ENCODE measurements at regions of chr2 and their contacts with region 1.

Region 1: DNA sequence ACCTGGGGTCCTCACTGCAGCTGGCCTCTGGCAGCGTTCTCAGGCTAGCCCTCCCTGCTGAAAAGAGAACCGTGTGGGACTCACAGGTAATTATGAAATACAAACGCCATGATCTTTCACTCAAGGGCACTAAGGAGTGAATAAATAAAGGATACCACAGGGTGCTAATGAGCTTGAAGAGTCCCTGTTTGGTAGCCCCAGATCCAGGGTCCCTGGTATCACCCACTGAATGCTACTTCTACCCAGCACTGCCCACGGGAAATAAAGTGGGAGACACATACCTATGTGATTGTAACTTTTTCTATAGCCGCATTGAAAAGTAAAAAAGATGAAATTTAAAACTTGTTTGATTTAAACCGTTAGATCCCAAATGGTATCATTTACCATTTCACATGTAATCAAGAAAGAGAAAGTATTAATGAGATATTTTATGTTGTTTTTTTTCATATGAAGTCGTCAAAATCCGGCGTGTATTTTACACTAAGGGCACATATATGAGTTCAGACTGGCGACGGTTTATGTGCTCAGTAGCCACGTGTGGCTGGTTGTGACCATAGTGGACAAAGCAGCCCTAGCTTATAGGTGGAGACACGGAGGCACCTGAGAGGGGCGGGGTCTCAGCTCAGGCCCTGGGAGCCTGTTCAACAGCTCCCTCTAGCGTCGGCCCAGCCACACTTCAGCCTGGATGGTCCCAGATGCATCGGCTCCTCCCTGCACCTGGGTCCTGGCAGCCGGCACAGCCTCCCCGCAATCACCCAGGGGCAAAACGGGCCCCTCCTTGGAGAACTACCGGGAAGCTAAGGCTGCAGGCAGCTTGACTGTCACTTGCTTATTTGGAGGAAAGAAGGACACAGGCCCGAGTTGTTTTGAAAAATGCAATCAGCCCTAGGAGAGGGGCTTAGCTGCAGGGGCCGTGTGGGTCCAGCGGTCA is 39.2 kb downstream of the ODC1 start:
- DNase-seq: peak; percentile 87
- H3K4me3 Mint-ChIP-seq: peak overlapping the region; percentile 66
- H3K27ac Mint-ChIP-seq: peak overlapping the region; percentile 92
- H3K4me1 Mint-ChIP-seq: peaks cover 42% of the 10 kb centered on the region
- H3K27me3 Mint-ChIP-seq: no peaks in the 10 kb centered on the region

Region 2: GRCh38 chr2:10120158-10120886 is 288.6 kb before region 1 on chr2:
- CTCF ChIA-PET with region 1: interaction called, 22 read pairs
- POLR2A ChIA-PET with region 1: no interaction called
- DNase-seq: peak; percentile 96
- H3K4me3 Mint-ChIP-seq: peak overlapping the region; percentile 98
- H3K27ac Mint-ChIP-seq: peak overlapping the region; percentile 99
- H3K4me1 Mint-ChIP-seq: peaks cover 57% of the 10 kb centered on the region
- H3K27me3 Mint-ChIP-seq: no peaks in the 10 kb centered on the region

Region 3: DNA sequence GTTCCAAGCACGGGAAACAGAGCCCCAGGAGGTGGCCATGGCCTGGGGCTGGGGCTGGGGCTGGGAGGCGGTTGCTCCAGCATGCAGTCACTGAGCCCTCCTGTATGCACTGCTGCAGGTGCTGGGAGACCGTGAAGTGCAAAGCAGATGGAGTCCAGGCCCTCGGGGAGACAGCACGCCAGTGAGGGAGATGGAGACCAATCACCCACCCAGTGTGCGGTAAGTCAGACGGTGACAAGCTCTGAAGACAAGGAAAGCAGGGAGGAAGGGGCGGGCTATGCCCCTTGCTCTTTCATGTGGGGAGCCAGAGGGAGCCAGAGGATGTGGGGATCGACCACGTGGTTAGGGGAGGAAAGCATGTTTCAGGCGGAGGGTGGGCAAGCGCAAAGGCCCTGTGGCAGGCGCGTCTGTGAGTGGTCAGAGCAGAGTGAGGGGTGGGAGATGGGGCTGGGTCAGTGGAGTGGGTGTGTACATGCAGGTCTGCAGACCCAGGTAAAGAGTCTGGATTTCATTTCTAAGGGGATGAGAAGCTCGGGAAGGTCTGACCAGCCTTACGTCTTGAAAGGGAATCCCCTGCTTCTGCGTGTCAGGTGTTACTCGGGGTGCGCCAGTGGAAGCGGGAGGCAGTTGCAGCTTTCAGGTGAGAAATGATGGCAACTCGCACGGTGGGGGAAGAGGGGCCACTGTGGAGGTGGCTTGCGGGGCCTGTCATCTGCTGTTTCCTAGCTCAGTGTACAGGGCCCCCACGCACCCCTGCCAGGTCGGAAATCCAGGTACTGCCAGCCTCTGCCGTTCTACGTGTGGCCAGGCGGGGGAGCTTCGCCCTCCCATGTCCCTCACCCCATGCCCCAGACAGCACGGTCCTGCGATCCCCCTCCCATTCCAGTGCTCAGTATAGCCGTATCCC is 266.9 kb before region 1 on chr2:
- CTCF ChIA-PET with region 1: interaction called, 20 read pairs
- POLR2A ChIA-PET with region 1: no interaction called
- DNase-seq: peak; percentile 72
- H3K4me3 Mint-ChIP-seq: peak overlapping the region; percentile 38
- H3K27ac Mint-ChIP-seq: peak overlapping the region; percentile 82
- H3K4me1 Mint-ChIP-seq: peaks cover 47% of the 10 kb centered on the region
- H3K27me3 Mint-ChIP-seq: no peaks in the 10 kb centered on the region

Region 4: DNA sequence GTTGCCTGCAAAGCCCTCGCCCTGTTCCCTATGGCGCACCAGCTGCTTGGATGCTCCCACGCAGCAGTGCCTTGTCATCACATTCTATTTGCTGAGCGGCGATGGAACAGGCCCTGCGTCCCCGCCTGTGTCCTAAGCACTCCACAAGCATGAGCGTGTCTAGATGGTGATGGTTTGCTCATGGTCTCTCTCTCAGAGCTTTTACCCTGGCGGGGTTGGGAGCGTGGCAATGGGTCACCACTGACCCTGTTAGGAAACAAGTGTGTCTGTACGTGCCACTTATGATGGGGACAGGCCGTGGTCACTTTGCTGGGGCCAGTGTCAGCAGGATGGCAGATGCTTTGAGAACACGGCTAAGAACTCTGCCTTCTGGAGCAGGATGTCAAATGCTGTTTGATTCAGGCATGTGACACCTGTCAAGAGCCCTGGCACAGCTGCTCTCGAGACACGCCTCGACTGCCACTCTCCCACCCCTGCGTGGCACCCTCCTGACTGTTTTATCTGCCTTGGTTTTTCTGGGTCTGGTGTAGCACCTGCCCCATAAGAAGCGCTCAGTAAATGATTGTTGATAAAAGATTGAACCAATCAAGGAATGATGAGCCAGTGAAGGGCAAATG is 242.1 kb before region 1 on chr2:
- CTCF ChIA-PET with region 1: no interaction called
- POLR2A ChIA-PET with region 1: no interaction called
- DNase-seq: no peak
- H3K4me3 Mint-ChIP-seq: no peak overlapping the region
- H3K27ac Mint-ChIP-seq: no peak overlapping the region
- H3K4me1 Mint-ChIP-seq: peaks cover 10% of the 10 kb centered on the region
- H3K27me3 Mint-ChIP-seq: no peaks in the 10 kb centered on the region

Region 5: GRCh38 chr2:10297241-10297830 is 111.6 kb before region 1 on chr2:
- CTCF ChIA-PET with region 1: interaction called, 31 read pairs
- POLR2A ChIA-PET with region 1: interaction called, 3 read pairs
- DNase-seq: no peak
- H3K4me3 Mint-ChIP-seq: no peak overlapping the region
- H3K27ac Mint-ChIP-seq: peak overlapping the region; percentile 71
- H3K4me1 Mint-ChIP-seq: peaks cover 42% of the 10 kb centered on the region
- H3K27me3 Mint-ChIP-seq: peaks cover 5% of the 10 kb centered on the region

Region 6: GRCh38 chr2:10382354-10383061 is 26.4 kb before region 1 on chr2:
- CTCF ChIA-PET with region 1: interaction called, 17 read pairs
- POLR2A ChIA-PET with region 1: interaction called, 3 read pairs
- DNase-seq: peak; percentile 49
- H3K4me3 Mint-ChIP-seq: peak overlapping the region; percentile 42
- H3K27ac Mint-ChIP-seq: peak overlapping the region; percentile 84
- H3K4me1 Mint-ChIP-seq: peaks cover 83% of the 10 kb centered on the region
- H3K27me3 Mint-ChIP-seq: no peaks in the 10 kb centered on the region

Region 7: DNA sequence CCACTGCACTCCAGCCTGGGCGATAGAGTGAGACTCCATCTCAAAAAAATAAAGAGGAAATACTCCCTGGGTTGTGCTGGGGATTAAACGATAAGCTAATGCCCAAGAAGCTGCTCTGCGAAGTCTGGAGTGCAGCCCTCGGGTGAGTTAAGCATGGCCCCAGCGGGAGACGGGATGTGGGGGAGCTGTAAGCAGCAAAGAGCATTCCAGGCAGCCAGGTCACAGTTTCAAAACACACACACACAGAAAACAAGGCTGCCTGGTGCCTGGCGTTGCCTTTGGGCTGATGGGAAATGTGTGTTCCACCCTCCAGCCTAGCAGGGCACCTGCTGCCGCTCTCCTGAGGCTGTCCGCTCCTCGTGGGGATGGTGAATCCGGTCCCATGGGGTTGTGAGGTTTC is 15.1 kb after region 1 on chr2:
- CTCF ChIA-PET with region 1: interaction called, 13 read pairs
- POLR2A ChIA-PET with region 1: no interaction called
- DNase-seq: no peak
- H3K4me3 Mint-ChIP-seq: no peak overlapping the region
- H3K27ac Mint-ChIP-seq: no peak overlapping the region
- H3K4me1 Mint-ChIP-seq: no peaks in the 10 kb centered on the region
- H3K27me3 Mint-ChIP-seq: no peaks in the 10 kb centered on the region

Region 8: DNA sequence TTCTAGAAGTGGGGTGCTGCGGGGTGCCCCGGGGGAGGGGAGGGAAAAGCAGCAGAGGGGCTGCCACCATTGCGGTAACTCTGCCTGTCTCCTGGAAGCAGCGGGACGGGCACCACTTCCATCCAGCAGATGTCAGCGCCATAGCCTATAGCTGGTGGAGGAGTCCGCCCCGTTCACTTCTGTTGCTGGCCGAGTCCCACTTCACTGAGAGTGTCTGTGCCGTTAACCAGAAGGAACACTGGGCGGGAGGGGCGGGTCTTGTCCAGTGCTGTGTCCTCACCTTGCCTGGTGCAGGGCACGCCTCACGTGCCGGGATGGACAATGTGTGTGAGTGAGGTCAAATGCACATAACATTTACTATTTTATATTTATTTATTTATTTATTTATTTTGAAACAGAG is 58.5 kb after region 1 on chr2:
- CTCF ChIA-PET with region 1: no interaction called
- POLR2A ChIA-PET with region 1: no interaction called
- DNase-seq: no peak
- H3K4me3 Mint-ChIP-seq: no peak overlapping the region
- H3K27ac Mint-ChIP-seq: no peak overlapping the region
- H3K4me1 Mint-ChIP-seq: no peaks in the 10 kb centered on the region
- H3K27me3 Mint-ChIP-seq: no peaks in the 10 kb centered on the region

Measured in activated CD4-positive, alpha-beta T cell treated with anti-CD3 and anti-CD28 coated beads, Interleukin-2, amount 10 ng/mL, durations not matched to agents 7 days and 5 days (primary cell).